ENCODE measurements at regions of chr20 and their contacts with region 1.

Region 1: GRCh38 chr20:38446441-38447209 is 11.5 kb upstream of the SNHG17 start:
- DNase-seq: peak; percentile 67
- H3K4me3 ChIP-seq: peak overlapping the region; percentile 83
- CTCF ChIP-seq: peak; percentile 97

Region 2: GRCh38 chr20:38418509-38419204 is 28.0 kb before region 1 on chr20:
- CTCF ChIA-PET with region 1: interaction called, 11 read pairs
- POLR2A ChIA-PET with region 1: no interaction called
- DNase-seq: no peak
- H3K4me3 ChIP-seq: no peak overlapping the region
- CTCF ChIP-seq: no peak

Region 3: GRCh38 chr20:38434743-38435554 is 11.7 kb before region 1 on chr20 and contains the start of gene SNHG17:
- CTCF ChIA-PET with region 1: interaction called, 268 read pairs
- POLR2A ChIA-PET with region 1: interaction called, 62 read pairs
- DNase-seq: peak; percentile 76
- H3K4me3 ChIP-seq: peak within 1 kb of the TSS; percentile 92
- CTCF ChIP-seq: peak; percentile 99

Region 4: DNA sequence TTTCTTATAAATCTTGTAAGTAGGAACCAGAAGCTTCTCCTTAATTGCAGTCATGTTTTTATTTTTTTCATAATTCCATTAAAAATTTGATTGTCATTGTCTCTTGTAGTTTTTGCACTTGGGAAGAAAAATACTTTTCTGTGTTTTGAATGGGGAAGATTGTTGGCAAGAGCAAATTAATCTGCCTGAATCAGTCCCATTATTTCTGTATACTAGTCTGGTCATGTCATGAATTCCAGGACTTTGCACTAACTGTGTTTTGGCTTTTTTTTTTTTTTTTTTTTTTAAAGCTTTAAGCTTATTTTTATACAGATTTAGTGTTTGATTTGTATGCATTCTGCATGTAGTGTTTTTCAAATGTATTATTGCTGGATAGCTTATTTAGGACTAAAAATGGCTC is 73.6 kb after region 1 on chr20:
- CTCF ChIA-PET with region 1: interaction called, 11 read pairs
- POLR2A ChIA-PET with region 1: no interaction called
- DNase-seq: no peak
- H3K4me3 ChIP-seq: no peak overlapping the region
- CTCF ChIP-seq: no peak

Region 5: GRCh38 chr20:38601216-38602184 is 154.9 kb after region 1 on chr20 and contains the start of gene ARHGAP40:
- CTCF ChIA-PET with region 1: no interaction called
- POLR2A ChIA-PET with region 1: no interaction called
- DNase-seq: no peak
- H3K4me3 ChIP-seq: no peak within 1 kb of the TSS
- CTCF ChIP-seq: no peak